A673 (cell line): ENCODE measurements at regions of chr1 and their contacts with region 1.

Region 1: GRCh38 chr1:15152318-15153183 is 996 bp upstream of the TMEM51 start:
- DNase-seq: peak; percentile 84
- H3K4me3 ChIP-seq: peak overlapping the region; percentile 62
- H3K27ac ChIP-seq: no peak overlapping the region
- H3K4me1 ChIP-seq: peaks cover 13% of the 10 kb centered on the region
- H3K27me3 ChIP-seq: no peaks in the 10 kb centered on the region
- CTCF ChIP-seq: peak; percentile 79

Region 2: GRCh38 chr1:15014516-15014915 is 138.0 kb before region 1 on chr1:
- CTCF ChIA-PET with region 1: no interaction called
- POLR2A ChIA-PET with region 1: no interaction called
- intact Hi-C with region 1: no loop called
- DNase-seq: no peak
- H3K4me3 ChIP-seq: no peak overlapping the region
- H3K27ac ChIP-seq: no peak overlapping the region
- H3K4me1 ChIP-seq: no peaks in the 10 kb centered on the region
- H3K27me3 ChIP-seq: no peaks in the 10 kb centered on the region
- CTCF ChIP-seq: no peak

Region 3: GRCh38 chr1:15272009-15272788 is 119.6 kb after region 1 on chr1:
- CTCF ChIA-PET with region 1: interaction called, 3 read pairs
- POLR2A ChIA-PET with region 1: no interaction called
- intact Hi-C with region 1: loop called (anchors 1 kb)
- DNase-seq: peak; percentile 85
- H3K4me3 ChIP-seq: no peak overlapping the region
- H3K27ac ChIP-seq: no peak overlapping the region
- H3K4me1 ChIP-seq: peaks cover 6% of the 10 kb centered on the region
- H3K27me3 ChIP-seq: no peaks in the 10 kb centered on the region
- CTCF ChIP-seq: peak; percentile 83